Activated CD4-positive, alpha-beta memory T cell treated with anti-CD3 and anti-CD28 coated beads for 36 hours (primary cell): ENCODE measurements at regions of chr2 and their contacts with region 1.

Region 1: GRCh38 chr2:201363857-201364560 is 6.9 kb upstream of the FLACC1 start:
- DNase-seq: peak; percentile 32
- H3K4me3 Mint-ChIP-seq: no peak overlapping the region
- H3K27ac Mint-ChIP-seq: no peak overlapping the region
- H3K4me1 Mint-ChIP-seq: peaks cover 24% of the 10 kb centered on the region
- H3K27me3 Mint-ChIP-seq: no peaks in the 10 kb centered on the region

Region 2: DNA sequence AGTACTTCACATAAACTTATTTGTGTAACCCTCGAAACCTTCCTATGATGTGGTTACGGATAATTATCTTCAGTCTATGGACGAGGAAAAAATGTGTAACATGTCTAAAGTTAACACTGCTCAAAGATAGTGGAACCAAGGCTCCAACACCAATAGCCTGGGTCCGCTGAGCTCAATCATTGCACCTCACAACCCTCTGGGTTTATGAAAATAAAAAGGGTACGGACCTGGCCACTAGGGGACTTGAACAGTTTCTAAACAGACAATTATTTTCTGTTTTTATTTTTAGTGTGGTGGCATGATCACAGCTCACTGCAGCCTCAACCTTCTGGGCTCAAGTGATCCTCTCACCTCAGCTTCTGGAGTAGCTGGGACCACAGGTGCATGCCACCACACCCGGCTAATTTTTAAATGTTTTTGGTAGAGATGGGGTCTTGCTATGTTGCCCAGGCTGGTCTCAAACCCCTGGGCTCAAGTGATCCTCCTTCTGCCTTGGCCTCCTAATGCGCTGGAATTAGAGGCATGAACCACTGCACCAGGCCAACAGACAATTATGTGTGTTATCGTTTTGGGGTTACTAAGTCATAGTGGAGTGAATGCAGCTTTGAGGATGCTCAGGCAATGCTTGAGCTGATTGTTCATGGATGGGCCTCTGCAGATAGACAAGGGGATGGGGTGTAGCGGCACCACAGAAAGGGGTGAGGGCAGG is 93.6 kb before region 1 on chr2:
- CTCF ChIA-PET with region 1: interaction called, 11 read pairs
- POLR2A ChIA-PET with region 1: no interaction called
- intact Hi-C with region 1: no loop called
- DNase-seq: no peak
- H3K4me3 Mint-ChIP-seq: no peak overlapping the region
- H3K27ac Mint-ChIP-seq: no peak overlapping the region
- H3K4me1 Mint-ChIP-seq: peaks cover 82% of the 10 kb centered on the region
- H3K27me3 Mint-ChIP-seq: no peaks in the 10 kb centered on the region

Region 3: DNA sequence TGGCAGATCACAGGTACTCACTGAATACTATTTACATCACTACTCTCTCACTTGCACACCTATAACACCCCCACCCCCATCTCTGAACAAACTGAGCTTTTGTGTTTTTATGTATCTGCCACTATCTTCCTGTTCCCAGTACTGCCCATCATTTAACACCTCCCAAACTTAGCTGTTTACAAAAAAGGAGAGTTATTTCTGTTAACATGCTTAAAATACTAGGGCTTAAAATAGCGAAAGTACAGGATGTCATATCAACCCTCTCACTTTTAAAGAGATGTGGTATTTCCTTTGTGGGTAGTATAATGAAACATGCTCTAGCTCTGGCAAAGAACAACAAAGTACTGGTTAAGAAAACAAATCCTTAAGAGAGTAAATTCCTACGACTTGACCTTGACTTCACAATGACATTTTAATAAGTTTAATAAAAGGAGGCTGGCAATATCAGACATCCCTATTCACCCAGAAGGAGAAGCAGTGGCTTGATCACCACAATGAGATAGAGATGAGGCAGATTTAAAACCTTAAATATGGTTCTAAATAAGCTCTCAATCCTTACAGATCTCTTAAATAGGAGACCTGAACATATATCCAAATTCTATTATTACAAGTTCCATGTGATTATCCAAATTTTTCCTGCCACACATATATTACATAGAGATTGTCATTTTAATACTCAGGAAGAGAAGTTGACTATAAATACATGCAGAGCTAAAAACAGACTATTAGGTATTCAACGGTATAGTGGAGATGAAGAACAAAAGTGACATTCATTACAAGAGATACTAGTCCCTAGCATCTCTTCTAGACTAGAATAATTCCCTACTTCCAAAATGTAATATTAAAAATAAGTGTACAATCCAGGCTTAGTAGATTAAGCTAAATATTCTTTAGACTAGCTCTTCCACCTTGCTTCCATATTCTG is 50.4 kb after region 1 on chr2:
- CTCF ChIA-PET with region 1: no interaction called
- POLR2A ChIA-PET with region 1: no interaction called
- intact Hi-C with region 1: no loop called
- DNase-seq: no peak
- H3K4me3 Mint-ChIP-seq: no peak overlapping the region
- H3K27ac Mint-ChIP-seq: no peak overlapping the region
- H3K4me1 Mint-ChIP-seq: peaks cover 29% of the 10 kb centered on the region
- H3K27me3 Mint-ChIP-seq: no peaks in the 10 kb centered on the region